Naive thymus-derived CD4-positive, alpha-beta T cell (primary cell): ENCODE measurements at regions of chr17 and their contacts with region 1.

Region 1: DNA sequence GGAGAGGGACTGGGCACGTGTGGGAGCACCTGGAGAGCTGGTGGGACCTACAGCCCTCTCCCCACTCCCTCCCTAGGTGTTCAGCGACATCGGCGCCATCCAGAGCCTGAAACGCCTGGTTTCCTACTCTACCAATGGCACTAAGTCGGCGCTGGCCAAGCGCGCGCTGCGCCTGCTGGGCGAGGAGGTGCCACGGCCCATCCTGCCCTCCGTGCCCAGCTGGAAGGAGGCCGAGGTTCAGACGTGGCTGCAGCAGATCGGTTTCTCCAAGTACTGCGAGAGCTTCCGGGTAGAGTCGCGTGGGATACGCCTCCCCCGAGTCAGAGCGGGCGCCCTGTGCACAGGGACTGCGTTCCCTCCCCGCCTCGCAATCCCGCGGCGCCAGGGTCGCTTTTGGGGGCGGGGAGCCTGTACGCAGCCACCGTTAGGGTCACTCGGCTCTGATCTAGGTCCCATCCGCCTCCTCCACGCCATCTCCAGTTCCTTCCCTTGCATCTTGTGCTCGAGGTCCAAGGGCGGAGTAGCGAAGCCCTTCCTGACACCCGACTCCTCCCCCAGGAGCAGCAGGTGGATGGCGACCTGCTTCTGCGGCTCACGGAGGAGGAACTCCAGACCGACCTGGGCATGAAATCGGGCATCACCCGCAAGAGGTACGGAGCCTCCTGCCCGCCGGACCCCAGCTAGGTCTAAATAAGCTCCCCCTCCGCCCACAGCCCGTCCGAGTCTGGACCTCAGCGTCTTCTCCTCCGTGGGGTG is 13.0 kb downstream of the SARM1 start:
- DNase-seq: peak; percentile 27 to 67 (median 57)
- ATAC-seq: peak; percentile 93
- H3K4me3 ChIP-seq: peak overlapping the region; percentile 78
- H3K4me3 Mint-ChIP-seq: peak overlapping the region; percentile 88 to 96 (median 94)
- H3K27ac ChIP-seq: peak overlapping the region; percentile 67
- H3K27ac Mint-ChIP-seq: peak overlapping the region; percentile 37 to 88 (median 77)
- H3K4me1 ChIP-seq: peaks cover 6 to 14% of the 10 kb centered on the region in 2 donors
- H3K4me1 Mint-ChIP-seq: peaks cover 8 to 48% (median 33%) of the 10 kb centered on the region in 7 donors
- H3K27me3 ChIP-seq: no peaks in the 10 kb centered on the region
- H3K27me3 Mint-ChIP-seq: peaks cover 0 to 10% (median 6%) of the 10 kb centered on the region in 5 donors

Region 2: DNA sequence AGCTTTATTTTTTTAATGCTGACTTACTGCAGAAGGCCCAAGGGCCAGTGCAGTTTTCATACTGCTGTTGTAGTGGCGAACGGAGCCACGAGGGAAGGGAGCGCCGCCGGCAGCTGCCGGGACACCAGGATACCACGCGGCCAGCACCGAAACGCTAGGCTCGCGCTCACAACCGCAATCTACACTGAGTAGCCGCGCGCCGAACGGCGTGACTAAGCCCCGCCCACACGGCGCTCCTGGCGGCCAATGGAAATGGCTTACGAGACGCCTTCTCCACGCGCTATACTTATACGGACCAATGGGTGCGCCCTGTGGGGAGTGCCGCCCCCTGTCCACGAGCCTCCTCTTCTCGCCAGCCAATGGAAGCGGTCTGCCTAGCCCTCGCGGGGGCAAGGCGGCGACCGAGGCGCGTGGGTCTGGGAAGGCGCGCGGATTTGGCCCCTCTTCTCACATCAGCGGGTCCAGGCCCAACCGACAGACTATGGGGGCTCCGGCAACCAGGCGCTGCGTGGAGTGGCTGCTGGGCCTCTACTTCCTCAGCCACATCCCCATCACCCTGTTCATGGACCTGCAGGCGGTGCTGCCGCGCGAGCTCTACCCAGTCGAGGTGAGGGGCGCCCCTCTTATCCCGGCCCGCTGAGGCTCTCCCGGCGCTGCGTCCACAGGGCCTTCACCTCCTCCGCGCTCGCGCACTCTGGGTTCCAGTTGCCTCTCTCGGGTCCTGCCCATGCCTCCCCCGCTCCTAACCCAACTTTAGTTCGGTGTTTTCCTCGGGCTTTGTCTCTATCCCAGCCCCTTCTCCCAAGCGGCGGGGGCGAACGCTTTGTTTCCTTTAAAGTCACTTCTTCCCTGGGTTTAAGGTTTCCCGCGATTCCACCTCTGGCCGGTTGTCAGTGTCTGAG is 65.4 kb before region 1 on chr17 and contains the start of gene TMEM97:
- CTCF ChIA-PET with region 1: no interaction called
- POLR2A ChIA-PET with region 1: interaction called, 6 read pairs
- intact Hi-C with region 1: loop called in 1 of 2 experiments (anchors 1 kb)
- DNase-seq: peak; percentile 83 to 95 (median 93)
- ATAC-seq: peak; percentile 99
- H3K4me3 ChIP-seq: peak within 1 kb of the TSS; percentile 69
- H3K4me3 Mint-ChIP-seq: peak within 1 kb of the TSS; percentile 77 to 97 (median 91)
- H3K27ac ChIP-seq: peak within 1 kb of the TSS; percentile 64
- H3K27ac Mint-ChIP-seq: peak within 1 kb of the TSS; percentile 37 to 90 (median 80)
- H3K4me1 ChIP-seq: peaks cover 11 to 12% of the 10 kb centered on the region in 2 donors
- H3K4me1 Mint-ChIP-seq: peaks cover 9 to 40% (median 21%) of the 10 kb centered on the region in 7 donors
- H3K27me3 ChIP-seq: no peaks in the 10 kb centered on the region
- H3K27me3 Mint-ChIP-seq: no peaks in the 10 kb centered on the region
- total RNA-seq, gene TMEM97: 2.9 to 19.9 (median 4.8) TPM

Region 3: DNA sequence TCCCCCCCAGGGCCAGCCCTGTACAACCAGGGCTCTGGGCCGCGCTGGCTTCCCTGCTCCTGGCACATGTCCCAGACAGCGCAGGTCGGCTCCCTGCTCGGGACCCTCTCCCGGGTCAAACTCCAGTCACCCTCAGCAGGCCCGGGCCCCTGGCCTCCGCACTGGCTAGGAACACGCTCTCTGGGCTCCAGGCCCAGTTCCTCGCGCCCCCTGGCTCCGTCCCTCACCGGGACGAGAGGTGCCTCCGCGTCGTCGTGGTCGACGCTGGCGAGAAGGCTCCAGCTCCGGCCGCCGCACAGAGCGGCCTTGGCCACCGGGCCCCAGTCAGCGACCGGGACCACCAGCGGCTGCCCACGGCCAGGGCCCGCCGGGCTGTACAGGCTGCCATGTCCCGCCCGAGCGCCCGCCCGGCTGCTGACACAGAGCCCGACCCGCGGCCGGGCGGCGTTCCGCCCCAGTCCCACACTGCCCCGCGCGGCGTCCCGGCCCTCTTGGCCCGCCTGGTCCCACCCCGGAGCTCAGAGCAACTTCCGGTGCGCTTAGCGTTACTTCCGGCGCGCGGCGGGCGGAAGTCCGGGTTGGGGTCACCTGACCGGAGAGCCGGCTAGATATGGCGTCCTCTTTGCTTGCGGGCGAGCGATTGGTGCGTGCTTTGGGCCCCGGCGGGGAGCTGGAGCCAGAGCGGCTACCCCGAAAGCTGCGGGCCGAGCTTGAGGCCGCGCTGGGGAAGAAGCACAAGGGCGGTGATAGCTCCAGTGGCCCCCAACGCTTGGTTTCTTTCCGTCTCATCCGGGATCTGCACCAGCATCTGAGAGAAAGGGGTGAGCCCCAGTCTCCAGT is 27.2 kb before region 1 on chr17 and contains the start of gene POLDIP2:
- CTCF ChIA-PET with region 1: interaction called, 3 read pairs
- POLR2A ChIA-PET with region 1: interaction called, 13 read pairs
- intact Hi-C with region 1: loop called (anchors 1 to 2 kb)
- DNase-seq: peak; percentile 94 to 97 (median 96)
- ATAC-seq: peak; percentile 99
- H3K4me3 ChIP-seq: peak within 1 kb of the TSS; percentile 80
- H3K4me3 Mint-ChIP-seq: peak within 1 kb of the TSS; percentile 91 to 98 (median 94)
- H3K27ac ChIP-seq: peak within 1 kb of the TSS; percentile 90
- H3K27ac Mint-ChIP-seq: peak within 1 kb of the TSS; percentile 89 to 97 (median 94)
- H3K4me1 ChIP-seq: peaks cover 17 to 21% of the 10 kb centered on the region in 2 donors
- H3K4me1 Mint-ChIP-seq: peaks cover 19 to 40% (median 29%) of the 10 kb centered on the region in 7 donors
- H3K27me3 ChIP-seq: no peaks in the 10 kb centered on the region
- H3K27me3 Mint-ChIP-seq: no peaks in the 10 kb centered on the region
- total RNA-seq, gene POLDIP2: 27.9 to 64.9 (median 29.8) TPM